Spleen (tissue), 13 donors: ENCODE measurements at regions of chr12 and their contacts with region 1.

Region 1: DNA sequence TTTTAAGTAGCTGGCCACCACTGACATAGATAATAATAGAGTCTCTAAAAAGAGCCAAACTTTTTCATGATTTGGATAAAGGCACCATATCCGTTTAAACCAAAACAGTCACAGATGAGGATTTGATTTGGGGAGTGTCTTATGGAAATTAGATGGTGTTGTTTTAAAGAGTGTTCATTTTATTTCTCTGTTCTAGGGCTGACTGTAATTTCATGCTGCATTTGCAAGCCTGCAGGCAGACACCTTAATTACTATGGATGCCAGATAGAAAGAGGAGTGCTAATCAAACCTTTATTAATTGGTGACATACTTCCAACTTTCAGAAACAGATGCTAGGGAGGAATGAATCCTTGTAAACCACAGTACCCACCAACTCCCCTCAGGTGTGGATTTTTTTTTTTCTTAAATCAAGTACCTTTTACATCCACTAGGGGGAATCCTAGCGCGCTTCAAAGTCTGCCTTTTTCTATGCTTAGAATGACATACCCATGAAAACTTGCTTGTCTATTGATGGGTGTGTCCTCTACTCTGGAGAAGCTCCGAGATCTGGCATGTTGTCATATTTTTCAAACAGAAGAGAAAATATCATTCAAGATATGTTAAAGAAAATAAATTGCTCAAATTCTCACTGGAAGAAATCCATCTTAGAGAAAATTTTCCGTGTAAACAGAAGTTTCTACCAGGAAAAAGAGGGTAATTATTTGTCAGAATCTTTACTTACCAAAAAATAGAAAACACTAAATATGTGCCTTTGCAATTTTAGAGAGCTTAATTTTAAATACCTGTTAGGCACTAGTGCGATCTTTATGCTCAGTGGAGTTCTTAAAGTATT is 14.2 kb upstream of the PLXNC1 start:
- DNase-seq: no peak
- H3K4me3 ChIP-seq: no peak overlapping the region
- H3K27ac ChIP-seq: no peak overlapping the region
- H3K4me1 ChIP-seq: peaks cover 0 to 13% (median 4%) of the 10 kb centered on the region in 6 donors
- H3K27me3 ChIP-seq: no peaks in the 10 kb centered on the region
- CTCF ChIP-seq: peak; percentile 39 to 80 (median 70)
- POLR2A ChIP-seq: no peak

Region 2: DNA sequence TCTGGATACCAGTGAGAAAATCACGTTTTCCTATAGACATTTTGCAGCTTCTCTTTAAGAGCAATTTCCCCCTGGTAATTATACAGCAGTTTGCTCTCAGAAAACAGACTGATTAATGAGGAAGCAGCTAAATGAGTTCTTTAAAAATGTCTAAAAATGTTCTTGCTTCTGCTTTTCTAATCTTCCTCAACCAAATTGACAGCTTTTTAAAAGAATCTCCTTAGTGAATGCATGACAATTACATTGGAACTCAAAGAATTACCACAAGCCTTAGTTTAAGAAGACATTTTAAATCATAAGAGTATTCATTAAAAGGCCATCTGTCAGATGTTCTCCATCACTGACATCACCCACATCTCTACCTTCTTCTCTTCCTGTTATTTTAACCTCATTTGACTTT is 121.6 kb before region 1 on chr12:
- intact Hi-C with region 1: no loop called
- DNase-seq: no peak
- H3K4me3 ChIP-seq: no peak overlapping the region
- H3K27ac ChIP-seq: peak overlapping the region in 1 of 8 donors; percentile 21
- H3K4me1 ChIP-seq: peaks cover 0 to 20% (median 0%) of the 10 kb centered on the region in 6 donors
- H3K27me3 ChIP-seq: no peaks in the 10 kb centered on the region
- CTCF ChIP-seq: no peak
- POLR2A ChIP-seq: no peak

Region 3: GRCh38 chr12:94057262-94058151 is 76.7 kb before region 1 on chr12:
- intact Hi-C with region 1: no loop called
- DNase-seq: no peak
- H3K4me3 ChIP-seq: no peak overlapping the region
- H3K27ac ChIP-seq: no peak overlapping the region
- H3K4me1 ChIP-seq: no peaks in the 10 kb centered on the region
- H3K27me3 ChIP-seq: no peaks in the 10 kb centered on the region
- CTCF ChIP-seq: no peak
- POLR2A ChIP-seq: no peak

Region 4: GRCh38 chr12:94186278-94187241 is 52.4 kb after region 1 on chr12:
- intact Hi-C with region 1: no loop called
- DNase-seq: no peak
- H3K4me3 ChIP-seq: no peak overlapping the region
- H3K27ac ChIP-seq: no peak overlapping the region
- H3K4me1 ChIP-seq: peaks cover 0 to 11% (median 0%) of the 10 kb centered on the region in 6 donors
- H3K27me3 ChIP-seq: no peaks in the 10 kb centered on the region
- CTCF ChIP-seq: no peak
- POLR2A ChIP-seq: no peak

Region 5: GRCh38 chr12:94435511-94435927 is 301.3 kb after region 1 on chr12:
- intact Hi-C with region 1: loop called (anchors 10 kb)
- DNase-seq: peak; percentile 25
- H3K4me3 ChIP-seq: no peak overlapping the region
- H3K27ac ChIP-seq: no peak overlapping the region
- H3K4me1 ChIP-seq: peaks cover 0 to 16% (median 3%) of the 10 kb centered on the region in 6 donors
- H3K27me3 ChIP-seq: no peaks in the 10 kb centered on the region
- CTCF ChIP-seq: no peak
- POLR2A ChIP-seq: no peak

Region 6: DNA sequence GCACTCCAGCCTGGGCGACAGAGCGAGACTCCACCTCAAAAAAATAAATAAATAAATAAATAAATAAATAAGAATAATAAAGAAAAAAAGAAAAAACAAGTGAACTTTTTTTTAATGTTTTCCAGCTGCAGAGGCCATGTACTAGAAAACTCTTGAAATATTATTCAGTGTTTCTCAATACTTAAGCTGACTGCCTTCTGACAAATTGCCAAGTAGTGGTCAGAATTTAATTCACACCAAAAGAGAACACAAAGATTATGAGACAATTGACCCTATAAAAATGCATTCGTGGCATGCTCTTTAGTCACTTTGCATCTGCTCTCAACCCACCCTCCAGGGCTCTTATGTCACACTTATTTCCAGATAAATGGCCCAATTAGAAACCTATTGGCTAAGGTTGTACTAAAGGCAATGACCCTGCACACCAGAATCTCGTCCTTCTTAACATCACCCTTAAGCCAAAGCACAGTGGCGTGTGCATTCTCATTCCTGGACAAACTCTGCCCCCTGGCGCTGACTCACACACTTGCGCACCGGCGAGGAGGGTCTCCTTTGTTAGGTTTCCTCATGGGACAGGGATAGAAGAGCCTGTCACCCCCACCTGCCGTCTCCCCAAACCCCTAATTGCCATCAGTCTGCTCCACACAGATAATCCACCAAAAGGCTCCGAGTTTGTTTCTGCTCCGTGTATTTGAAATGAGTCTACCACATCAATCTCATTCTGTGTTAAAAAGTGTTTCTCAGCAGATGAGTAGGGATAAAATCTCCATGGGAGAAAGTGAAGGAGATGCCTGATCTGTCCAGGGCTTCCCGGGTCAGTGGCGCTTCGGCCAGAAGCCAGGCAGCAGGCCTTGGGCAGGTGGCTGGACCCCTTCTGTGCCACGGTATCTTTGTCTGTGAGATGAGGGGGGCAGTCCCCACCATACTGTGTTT is 398.6 kb after region 1 on chr12:
- intact Hi-C with region 1: loop called (anchors 2 kb)
- DNase-seq: peak; percentile 88
- H3K4me3 ChIP-seq: no peak overlapping the region
- H3K27ac ChIP-seq: no peak overlapping the region
- H3K4me1 ChIP-seq: peaks cover 0 to 9% (median 0%) of the 10 kb centered on the region in 6 donors
- H3K27me3 ChIP-seq: no peaks in the 10 kb centered on the region
- CTCF ChIP-seq: peak; percentile 65 to 85 (median 78)
- POLR2A ChIP-seq: no peak